Naive thymus-derived CD4-positive, alpha-beta T cell (primary cell): ENCODE measurements at regions of chr3 and their contacts with region 1.

Region 1: DNA sequence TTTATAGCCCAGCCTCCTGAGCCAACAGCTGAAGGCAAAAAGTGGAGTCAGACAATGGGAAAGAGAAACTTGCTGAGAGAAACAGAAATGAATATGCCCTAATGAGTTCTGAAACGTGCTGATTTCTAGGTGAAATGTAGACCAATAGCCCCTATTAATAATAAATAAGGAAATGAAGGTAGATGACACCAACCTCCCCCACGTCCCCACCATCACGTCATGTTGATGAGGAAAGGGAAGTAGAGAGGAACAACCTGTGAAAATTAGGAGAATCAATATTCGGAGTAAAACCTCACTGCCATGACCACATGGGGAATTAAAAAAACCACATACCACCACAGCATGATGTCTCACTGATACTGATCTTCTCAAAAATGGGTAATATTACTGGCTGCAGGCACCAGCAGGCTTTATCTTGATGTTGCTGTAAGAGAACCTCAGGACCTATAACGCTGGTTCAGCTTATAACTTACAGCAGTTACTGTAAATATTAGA is 64.0 kb downstream of the KAT2B start:
- DNase-seq: peak in 1 of 9 donors; percentile 35
- ATAC-seq: peak; percentile 87
- H3K4me3 ChIP-seq: no peak overlapping the region
- H3K4me3 Mint-ChIP-seq: peak overlapping the region in 5 of 10 donors; percentile 19 to 63 (median 27)
- H3K27ac ChIP-seq: peak overlapping the region; percentile 13
- H3K27ac Mint-ChIP-seq: peak overlapping the region; percentile 8 to 90 (median 54)
- H3K4me1 ChIP-seq: peaks cover 8 to 52% of the 10 kb centered on the region in 2 donors
- H3K4me1 Mint-ChIP-seq: peaks cover 6 to 72% (median 33%) of the 10 kb centered on the region in 7 donors
- H3K27me3 ChIP-seq: no peaks in the 10 kb centered on the region
- H3K27me3 Mint-ChIP-seq: no peaks in the 10 kb centered on the region

Region 2: DNA sequence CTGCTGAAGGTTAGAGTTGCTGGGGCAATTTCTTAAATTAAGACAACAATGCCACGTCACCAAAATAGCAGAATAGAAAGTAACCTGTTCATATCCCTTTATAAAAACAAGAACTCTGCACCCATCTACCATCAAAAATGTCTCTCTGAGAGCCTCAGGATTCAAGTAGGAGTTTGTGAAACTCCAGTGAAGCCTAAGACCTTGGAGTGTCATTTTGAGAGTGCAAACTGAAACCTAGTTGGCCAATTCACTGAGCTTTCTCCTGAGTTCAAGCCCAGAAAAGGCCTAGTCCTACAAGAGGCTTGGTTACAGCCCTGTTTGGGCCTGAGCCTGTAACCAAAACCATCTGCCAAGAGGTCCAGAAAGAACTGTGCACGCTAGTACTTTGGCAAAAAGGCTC is 505.3 kb before region 1 on chr3:
- CTCF ChIA-PET with region 1: no interaction called
- POLR2A ChIA-PET with region 1: no interaction called
- intact Hi-C with region 1: no loop called
- DNase-seq: no peak
- ATAC-seq: no peak
- H3K4me3 ChIP-seq: no peak overlapping the region
- H3K4me3 Mint-ChIP-seq: no peak overlapping the region
- H3K27ac ChIP-seq: no peak overlapping the region
- H3K27ac Mint-ChIP-seq: no peak overlapping the region
- H3K4me1 ChIP-seq: no peaks in the 10 kb centered on the region
- H3K4me1 Mint-ChIP-seq: peaks cover 0 to 5% (median 0%) of the 10 kb centered on the region in 7 donors
- H3K27me3 ChIP-seq: no peaks in the 10 kb centered on the region
- H3K27me3 Mint-ChIP-seq: peaks cover 0 to 25% (median 0%) of the 10 kb centered on the region in 5 donors

Region 3: DNA sequence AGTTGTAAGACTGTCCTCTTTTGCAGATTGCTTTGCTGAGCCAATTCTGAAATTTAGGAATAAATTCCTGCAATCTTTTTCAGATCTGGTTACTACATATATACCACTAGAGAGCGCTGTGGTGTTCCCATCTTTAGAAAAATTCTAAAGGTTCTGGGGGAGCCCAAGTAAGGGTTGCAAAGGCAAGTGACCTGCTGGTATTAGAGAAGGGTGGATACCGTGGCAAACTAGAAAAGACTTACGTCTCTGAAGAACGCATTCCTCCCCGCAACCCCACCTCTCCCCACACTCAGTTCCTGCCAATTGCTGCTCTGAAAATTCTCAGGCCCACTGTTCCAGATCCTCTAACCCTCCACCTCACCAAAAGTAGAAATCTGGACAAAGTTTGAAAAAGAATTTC is 218.7 kb before region 1 on chr3:
- CTCF ChIA-PET with region 1: no interaction called
- POLR2A ChIA-PET with region 1: no interaction called
- intact Hi-C with region 1: loop called in 1 of 2 experiments (anchors 5 kb)
- DNase-seq: peak in 6 of 9 donors; percentile 14 to 32 (median 18)
- ATAC-seq: peak; percentile 72
- H3K4me3 ChIP-seq: no peak overlapping the region
- H3K4me3 Mint-ChIP-seq: no peak overlapping the region
- H3K27ac ChIP-seq: no peak overlapping the region
- H3K27ac Mint-ChIP-seq: no peak overlapping the region
- H3K4me1 ChIP-seq: no peaks in the 10 kb centered on the region
- H3K4me1 Mint-ChIP-seq: peaks cover 0 to 7% (median 0%) of the 10 kb centered on the region in 7 donors
- H3K27me3 ChIP-seq: no peaks in the 10 kb centered on the region
- H3K27me3 Mint-ChIP-seq: peaks cover 0 to 11% (median 0%) of the 10 kb centered on the region in 5 donors